ENCODE measurements at regions of chr17 and their contacts with region 1.

Region 1: DNA sequence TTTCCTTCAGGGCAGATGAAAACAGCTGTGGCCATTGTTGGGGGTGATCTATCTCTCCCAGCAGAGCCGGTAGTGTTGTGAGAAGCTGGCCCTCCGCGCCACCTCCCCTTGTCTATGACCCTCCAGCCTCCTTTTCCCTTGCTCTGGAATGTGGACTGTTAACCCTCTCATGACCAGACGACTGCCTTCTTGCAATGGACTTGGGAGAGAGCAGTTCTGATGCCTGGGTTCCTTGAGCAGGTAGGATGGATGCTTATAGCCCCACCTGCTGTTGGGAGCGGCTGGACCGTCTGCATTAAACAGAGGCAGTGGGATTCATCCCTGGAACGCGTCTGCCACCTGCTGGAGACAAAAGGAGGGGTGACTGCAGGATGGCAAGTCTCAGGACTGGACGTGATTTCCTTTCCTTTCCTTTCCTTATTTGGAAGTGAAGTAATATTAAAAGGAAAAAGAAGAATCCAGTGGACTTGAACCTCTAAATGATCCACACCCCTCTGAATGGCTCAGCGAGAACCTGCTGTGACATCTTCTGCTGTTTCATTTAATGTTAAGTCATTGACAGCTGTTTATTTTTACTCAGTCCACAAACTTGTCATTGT is 1.8 kb upstream of the SOST start:
- DNase-seq: peak; percentile 82 to 93 (median 88)
- ATAC-seq: peak; percentile 99
- H3K4me3 ChIP-seq: no peak overlapping the region
- H3K4me3 Mint-ChIP-seq: no peak overlapping the region
- H3K27ac ChIP-seq: no peak overlapping the region
- H3K27ac Mint-ChIP-seq: no peak overlapping the region
- H3K4me1 ChIP-seq: no peaks in the 10 kb centered on the region
- H3K4me1 Mint-ChIP-seq: no peaks in the 10 kb centered on the region
- H3K27me3 ChIP-seq: peaks cover 16 to 26% of the 10 kb centered on the region in 2 experiments
- H3K27me3 Mint-ChIP-seq: peaks cover 29% of the 10 kb centered on the region
- CTCF ChIP-seq: peak; percentile 98

Region 2: GRCh38 chr17:43576563-43577229 is 183.7 kb before region 1 on chr17:
- CTCF ChIA-PET with region 1: interaction called, 5 read pairs
- POLR2A ChIA-PET with region 1: no interaction called
- intact Hi-C with region 1: loop called (anchors 1 kb)
- DNase-seq: peak; percentile 34 to 87 (median 59)
- ATAC-seq: peak; percentile 73
- H3K4me3 ChIP-seq: no peak overlapping the region
- H3K4me3 Mint-ChIP-seq: no peak overlapping the region
- H3K27ac ChIP-seq: no peak overlapping the region
- H3K27ac Mint-ChIP-seq: no peak overlapping the region
- H3K4me1 ChIP-seq: peaks cover 20% of the 10 kb centered on the region
- H3K4me1 Mint-ChIP-seq: peaks cover 15% of the 10 kb centered on the region
- H3K27me3 ChIP-seq: peaks cover 0 to 4% of the 10 kb centered on the region in 2 experiments
- H3K27me3 Mint-ChIP-seq: no peaks in the 10 kb centered on the region
- CTCF ChIP-seq: peak; percentile 98

Region 3: DNA sequence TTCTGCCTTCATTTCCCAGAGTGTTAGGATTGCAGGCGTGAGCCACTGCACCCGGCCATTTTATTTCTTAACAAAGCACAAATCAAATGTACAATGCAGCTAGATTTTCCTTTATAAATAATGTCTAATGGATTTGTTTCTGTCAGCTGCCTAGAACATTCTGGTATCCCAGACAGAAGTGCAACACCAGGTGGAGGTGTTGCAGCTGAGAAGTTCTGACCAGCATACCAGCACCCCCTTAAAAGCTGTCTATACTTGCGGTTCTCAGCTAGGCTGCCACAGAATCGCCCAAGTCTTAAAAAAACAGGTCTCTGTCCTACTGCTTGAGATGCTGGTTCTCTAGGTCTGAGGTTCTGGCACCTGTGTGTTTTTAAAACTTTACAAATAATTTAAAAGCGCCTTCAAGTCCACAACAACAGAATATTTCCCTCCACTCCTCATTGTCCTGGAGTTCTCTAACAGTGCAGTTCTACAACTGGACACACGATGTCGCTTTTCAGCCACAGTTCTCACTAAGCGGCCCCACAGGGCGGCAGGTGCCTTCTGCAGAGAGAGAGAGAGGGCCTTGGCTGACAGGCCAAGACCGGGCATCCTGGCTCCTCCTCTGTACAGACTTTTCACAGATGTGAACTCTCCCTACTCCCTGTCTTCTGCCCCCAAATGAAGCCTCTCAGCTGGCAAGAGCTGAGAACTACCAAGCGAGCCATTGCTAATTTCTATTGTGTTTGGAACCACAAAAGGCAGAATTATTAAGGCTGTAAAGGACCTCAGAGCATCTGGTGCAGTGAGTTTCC is 66.1 kb before region 1 on chr17:
- CTCF ChIA-PET with region 1: interaction called, 42 read pairs
- POLR2A ChIA-PET with region 1: interaction called, 5 read pairs
- intact Hi-C with region 1: loop called (anchors 1 kb)
- DNase-seq: peak; percentile 53 to 88 (median 65)
- ATAC-seq: peak; percentile 97
- H3K4me3 ChIP-seq: no peak overlapping the region
- H3K4me3 Mint-ChIP-seq: no peak overlapping the region
- H3K27ac ChIP-seq: no peak overlapping the region
- H3K27ac Mint-ChIP-seq: no peak overlapping the region
- H3K4me1 ChIP-seq: no peaks in the 10 kb centered on the region
- H3K4me1 Mint-ChIP-seq: no peaks in the 10 kb centered on the region
- H3K27me3 ChIP-seq: peaks cover 0 to 5% of the 10 kb centered on the region in 2 experiments
- H3K27me3 Mint-ChIP-seq: peaks cover 20% of the 10 kb centered on the region
- CTCF ChIP-seq: peak; percentile 90

Region 4: DNA sequence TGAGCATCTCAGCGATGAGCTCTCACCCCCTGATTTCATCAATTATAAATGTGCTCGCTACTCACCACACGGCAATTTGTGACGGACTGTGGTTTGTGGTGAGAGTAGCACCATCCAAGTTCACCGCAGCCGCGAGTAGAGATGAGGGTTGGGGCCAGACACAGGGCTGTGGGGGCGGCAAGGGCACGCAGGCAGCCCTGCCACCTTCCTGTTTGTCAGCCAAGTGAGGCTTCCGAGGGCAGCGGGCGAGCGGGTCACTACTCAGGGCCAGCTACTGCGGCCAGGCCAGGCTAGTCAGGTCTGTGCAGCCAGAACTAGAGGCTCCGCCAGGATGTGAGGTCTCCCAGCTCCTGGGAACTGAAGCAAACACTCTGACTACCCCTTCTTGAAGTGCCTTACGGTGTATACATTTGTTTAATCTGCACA is 59.0 kb before region 1 on chr17:
- CTCF ChIA-PET with region 1: interaction called, 15 read pairs
- POLR2A ChIA-PET with region 1: interaction called, 3 read pairs
- intact Hi-C with region 1: no loop called
- DNase-seq: peak in 6 of 14 experiments; percentile 3 to 54 (median 26)
- ATAC-seq: peak; percentile 32
- H3K4me3 ChIP-seq: no peak overlapping the region
- H3K4me3 Mint-ChIP-seq: no peak overlapping the region
- H3K27ac ChIP-seq: no peak overlapping the region
- H3K27ac Mint-ChIP-seq: no peak overlapping the region
- H3K4me1 ChIP-seq: peaks cover 10% of the 10 kb centered on the region
- H3K4me1 Mint-ChIP-seq: peaks cover 5% of the 10 kb centered on the region
- H3K27me3 ChIP-seq: peaks cover 0 to 12% of the 10 kb centered on the region in 2 experiments
- H3K27me3 Mint-ChIP-seq: peaks cover 38% of the 10 kb centered on the region
- CTCF ChIP-seq: no peak

Region 5: DNA sequence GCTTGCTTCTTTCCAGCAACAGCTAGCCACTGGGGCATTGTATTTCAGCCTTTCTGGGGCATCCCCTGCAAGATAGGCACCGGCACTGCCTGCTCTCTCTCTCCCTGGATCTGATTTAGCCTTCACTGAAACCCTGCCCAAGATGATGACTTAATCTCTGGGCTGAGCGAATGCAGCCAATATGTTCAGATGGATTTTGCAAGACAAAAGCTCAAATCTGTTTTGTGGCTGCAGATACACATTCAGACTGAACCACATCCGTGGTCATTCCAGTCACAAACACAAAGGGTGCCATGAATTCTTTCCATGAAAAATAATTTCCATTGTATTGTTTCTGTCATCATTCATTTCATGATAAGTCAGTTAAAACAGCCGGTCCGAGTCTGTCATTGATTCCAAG is 26.0 kb before region 1 on chr17:
- CTCF ChIA-PET with region 1: no interaction called
- POLR2A ChIA-PET with region 1: no interaction called
- intact Hi-C with region 1: no loop called
- DNase-seq: no peak
- ATAC-seq: no peak
- H3K4me3 ChIP-seq: no peak overlapping the region
- H3K4me3 Mint-ChIP-seq: no peak overlapping the region
- H3K27ac ChIP-seq: no peak overlapping the region
- H3K27ac Mint-ChIP-seq: no peak overlapping the region
- H3K4me1 ChIP-seq: no peaks in the 10 kb centered on the region
- H3K4me1 Mint-ChIP-seq: no peaks in the 10 kb centered on the region
- H3K27me3 ChIP-seq: peaks cover 0 to 4% of the 10 kb centered on the region in 2 experiments
- H3K27me3 Mint-ChIP-seq: peaks cover 23% of the 10 kb centered on the region
- CTCF ChIP-seq: no peak